Activated T-helper 1 cell treated with anti-CD3 and anti-CD28 coated beads, Interleukin-12 subunit alpha, Interleukin-12 subunit beta, Interleukin-2, Interleukin-4 antibody, amounts not matched to agents 30 ng/mL and 10 ng/mL and 1 ng/mL, durations not matched to agents 14 hours and 24 hours and 36 hours (primary cell): ENCODE measurements at regions of chr1 and their contacts with region 1.

Region 1: GRCh38 chr1:28329395-28330153 is 734 bp downstream of the MED18 start:
- DNase-seq: no peak
- H3K4me3 Mint-ChIP-seq: peak overlapping the region; percentile 96
- H3K27ac Mint-ChIP-seq: peak overlapping the region; percentile 98
- H3K4me1 Mint-ChIP-seq: peaks cover 31% of the 10 kb centered on the region
- H3K27me3 Mint-ChIP-seq: no peaks in the 10 kb centered on the region

Region 2: GRCh38 chr1:28235755-28236655 is 93.6 kb before region 1 on chr1 and contains the start of gene ATP5IF1:
- intact Hi-C with region 1: loop called (anchors 1 kb)
- DNase-seq: peak; percentile 94
- H3K4me3 Mint-ChIP-seq: no peak within 1 kb of the TSS
- H3K27ac Mint-ChIP-seq: no peak within 1 kb of the TSS
- H3K4me1 Mint-ChIP-seq: peaks cover 11% of the 10 kb centered on the region
- H3K27me3 Mint-ChIP-seq: no peaks in the 10 kb centered on the region
- total RNA-seq, gene ATP5IF1: 128 and 132 TPM in 2 replicates

Region 3: GRCh38 chr1:28259307-28260167 is 70.0 kb before region 1 on chr1 and contains the start of gene SESN2:
- intact Hi-C with region 1: loop called (anchors 1 kb)
- DNase-seq: peak; percentile 99
- H3K4me3 Mint-ChIP-seq: peak within 1 kb of the TSS; percentile 82
- H3K27ac Mint-ChIP-seq: peak within 1 kb of the TSS; percentile 90
- H3K4me1 Mint-ChIP-seq: peaks cover 51% of the 10 kb centered on the region
- H3K27me3 Mint-ChIP-seq: no peaks in the 10 kb centered on the region
- total RNA-seq, gene SESN2: 18.7 and 19.3 TPM in 2 replicates

Region 4: GRCh38 chr1:28369371-28370238 is 40.0 kb after region 1 on chr1 and contains the start of gene PHACTR4:
- intact Hi-C with region 1: loop called (anchors 1 kb)
- DNase-seq: peak; percentile 78
- H3K4me3 Mint-ChIP-seq: peak within 1 kb of the TSS; percentile 91
- H3K27ac Mint-ChIP-seq: peak within 1 kb of the TSS; percentile 95
- H3K4me1 Mint-ChIP-seq: peaks cover 36% of the 10 kb centered on the region
- H3K27me3 Mint-ChIP-seq: peaks cover 3% of the 10 kb centered on the region
- total RNA-seq, gene PHACTR4: 28.9 and 31.8 TPM in 2 replicates

Region 5: DNA sequence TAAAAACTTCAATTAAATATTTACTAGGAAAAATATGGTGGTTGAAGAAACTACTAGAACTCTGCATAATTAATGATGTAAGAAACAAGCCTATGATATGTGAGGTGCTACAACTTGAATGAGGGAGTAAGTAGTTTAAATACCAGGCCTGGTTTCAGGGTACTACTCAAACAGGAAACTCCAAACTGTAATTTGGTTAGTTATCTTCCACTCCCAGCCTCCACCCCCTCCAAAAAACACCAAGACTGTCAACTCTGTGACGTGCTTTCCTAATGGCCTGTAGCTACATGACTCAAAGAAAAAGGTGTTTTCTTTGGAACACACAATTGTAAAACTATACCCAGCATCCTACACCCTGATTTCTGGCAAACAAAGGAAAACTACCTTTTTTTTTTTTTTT is 120.3 kb after region 1 on chr1:
- intact Hi-C with region 1: loop called (anchors 5 kb)
- DNase-seq: peak; percentile 49
- H3K4me3 Mint-ChIP-seq: peak overlapping the region; percentile 47
- H3K27ac Mint-ChIP-seq: peak overlapping the region; percentile 88
- H3K4me1 Mint-ChIP-seq: peaks cover 42% of the 10 kb centered on the region
- H3K27me3 Mint-ChIP-seq: no peaks in the 10 kb centered on the region

Region 6: DNA sequence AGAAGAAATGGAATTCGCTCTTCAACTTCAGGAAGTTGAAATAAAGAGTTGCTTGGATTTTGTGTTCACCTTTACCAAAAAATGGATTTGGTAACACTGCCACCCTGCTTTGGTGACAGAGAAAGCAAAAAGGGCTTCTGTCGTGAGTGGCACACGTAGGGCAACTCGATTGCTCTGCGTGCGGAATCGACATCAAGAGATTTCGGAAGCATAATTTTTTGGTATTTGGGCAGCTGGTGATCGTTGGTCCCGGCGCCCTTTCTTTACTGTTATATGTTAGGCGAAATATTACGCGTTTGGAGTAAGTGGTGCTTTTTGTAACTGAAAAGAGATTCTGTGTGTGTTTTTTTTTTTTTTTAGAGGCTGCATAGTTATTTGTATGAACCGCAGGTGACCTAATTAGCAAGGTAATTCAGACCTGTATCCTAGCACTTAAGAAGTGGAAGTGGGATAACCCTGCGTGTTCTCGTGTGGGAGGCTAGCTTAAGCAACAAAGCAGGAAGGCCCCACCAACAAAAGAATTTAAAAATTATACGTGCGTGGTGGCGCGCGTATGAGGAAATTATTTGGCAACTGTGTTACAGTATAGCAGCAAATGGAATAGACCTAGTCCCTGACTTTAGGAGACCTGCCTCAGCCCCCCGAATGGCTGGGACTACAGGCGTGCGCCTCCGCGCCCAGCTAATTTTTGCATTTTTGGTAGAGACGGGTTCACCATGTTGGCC is 319.1 kb after region 1 on chr1 and contains the start of gene RNU11:
- intact Hi-C with region 1: loop called (anchors 1 kb)
- DNase-seq: peak; percentile 86
- H3K4me3 Mint-ChIP-seq: peak within 1 kb of the TSS; percentile 92
- H3K27ac Mint-ChIP-seq: peak within 1 kb of the TSS; percentile 100
- H3K4me1 Mint-ChIP-seq: peaks cover 31% of the 10 kb centered on the region
- H3K27me3 Mint-ChIP-seq: peaks cover 2% of the 10 kb centered on the region
- total RNA-seq, gene RNU11: not detected in 2 replicates